A549 (cell line): ENCODE measurements at regions of chr20 and their contacts with region 1.

Region 1: GRCh38 chr20:45971675-45972499 is at the start of gene ZNF335:
- DNase-seq: peak; percentile 92 to 98
- ATAC-seq: peak; percentile 77 to 91
- H3K4me3 ChIP-seq: peak within 1 kb of the TSS; percentile 95
- H3K27ac ChIP-seq: peak within 1 kb of the TSS; percentile 98 to 99
- H3K4me1 ChIP-seq: peaks cover 21% of the 10 kb centered on the region
- CTCF ChIP-seq: no peak
- EP300 ChIP-seq: no peak
- POLR2A ChIP-seq: peak; percentile 53
- RAD21 ChIP-seq: no peak
- polyA plus RNA-seq, gene ZNF335: 7.3 and 8.4 TPM in 2 replicates

Region 2: GRCh38 chr20:45940053-45940452 is 31.8 kb before region 1 on chr20:
- CTCF ChIA-PET with region 1: interaction called, 358 read pairs
- POLR2A ChIA-PET with region 1: interaction called, 29 read pairs
- DNase-seq: no peak
- ATAC-seq: no peak
- H3K4me3 ChIP-seq: no peak overlapping the region
- H3K27ac ChIP-seq: no peak overlapping the region
- H3K4me1 ChIP-seq: peaks cover 25% of the 10 kb centered on the region
- CTCF ChIP-seq: no peak
- EP300 ChIP-seq: no peak
- POLR2A ChIP-seq: no peak
- RAD21 ChIP-seq: no peak

Region 3: GRCh38 chr20:45987108-45987780 is 15.4 kb after region 1 on chr20:
- CTCF ChIA-PET with region 1: interaction called, 86 read pairs
- POLR2A ChIA-PET with region 1: interaction called, 8 read pairs
- DNase-seq: peak; percentile 83 to 86
- ATAC-seq: peak; percentile 97 to 99
- H3K4me3 ChIP-seq: no peak overlapping the region
- H3K27ac ChIP-seq: no peak overlapping the region
- H3K4me1 ChIP-seq: peaks cover 5% of the 10 kb centered on the region
- CTCF ChIP-seq: peak; percentile 82
- EP300 ChIP-seq: no peak
- POLR2A ChIP-seq: no peak
- RAD21 ChIP-seq: peak; percentile 72 to 79

Region 4: GRCh38 chr20:46070215-46070900 is 98.5 kb after region 1 on chr20:
- CTCF ChIA-PET with region 1: no interaction called
- POLR2A ChIA-PET with region 1: no interaction called
- DNase-seq: no peak
- ATAC-seq: peak in 1 of 2 experiments; percentile 36; a peak in 1 of 6 replicates
- H3K4me3 ChIP-seq: no peak overlapping the region
- H3K27ac ChIP-seq: no peak overlapping the region
- H3K4me1 ChIP-seq: no peaks in the 10 kb centered on the region
- CTCF ChIP-seq: no peak
- EP300 ChIP-seq: no peak
- POLR2A ChIP-seq: no peak
- RAD21 ChIP-seq: no peak